ENCODE measurements at regions of chr17 and their contacts with region 1.

Region 1: GRCh38 chr17:19362277-19363113 is at the start of gene B9D1:
- DNase-seq: peak; percentile 98
- ATAC-seq: peak; percentile 83
- H3K4me3 ChIP-seq: peak within 1 kb of the TSS; percentile 79
- H3K27ac ChIP-seq: peak within 1 kb of the TSS; percentile 59
- H3K4me1 ChIP-seq: peaks cover 10% of the 10 kb centered on the region
- H3K27me3 ChIP-seq: no peaks in the 10 kb centered on the region
- CTCF ChIP-seq: peak; percentile 98
- total RNA-seq, gene B9D1: 42.8 and 48.0 TPM in 2 replicates

Region 2: GRCh38 chr17:19348807-19349206 is 13.7 kb before region 1 on chr17:
- CTCF ChIA-PET with region 1: interaction called, 13 read pairs
- POLR2A ChIA-PET with region 1: no interaction called
- intact Hi-C with region 1: no loop called
- DNase-seq: no peak
- ATAC-seq: no peak
- H3K4me3 ChIP-seq: no peak overlapping the region
- H3K27ac ChIP-seq: no peak overlapping the region
- H3K4me1 ChIP-seq: peaks cover 30% of the 10 kb centered on the region
- H3K27me3 ChIP-seq: no peaks in the 10 kb centered on the region
- CTCF ChIP-seq: no peak

Region 3: DNA sequence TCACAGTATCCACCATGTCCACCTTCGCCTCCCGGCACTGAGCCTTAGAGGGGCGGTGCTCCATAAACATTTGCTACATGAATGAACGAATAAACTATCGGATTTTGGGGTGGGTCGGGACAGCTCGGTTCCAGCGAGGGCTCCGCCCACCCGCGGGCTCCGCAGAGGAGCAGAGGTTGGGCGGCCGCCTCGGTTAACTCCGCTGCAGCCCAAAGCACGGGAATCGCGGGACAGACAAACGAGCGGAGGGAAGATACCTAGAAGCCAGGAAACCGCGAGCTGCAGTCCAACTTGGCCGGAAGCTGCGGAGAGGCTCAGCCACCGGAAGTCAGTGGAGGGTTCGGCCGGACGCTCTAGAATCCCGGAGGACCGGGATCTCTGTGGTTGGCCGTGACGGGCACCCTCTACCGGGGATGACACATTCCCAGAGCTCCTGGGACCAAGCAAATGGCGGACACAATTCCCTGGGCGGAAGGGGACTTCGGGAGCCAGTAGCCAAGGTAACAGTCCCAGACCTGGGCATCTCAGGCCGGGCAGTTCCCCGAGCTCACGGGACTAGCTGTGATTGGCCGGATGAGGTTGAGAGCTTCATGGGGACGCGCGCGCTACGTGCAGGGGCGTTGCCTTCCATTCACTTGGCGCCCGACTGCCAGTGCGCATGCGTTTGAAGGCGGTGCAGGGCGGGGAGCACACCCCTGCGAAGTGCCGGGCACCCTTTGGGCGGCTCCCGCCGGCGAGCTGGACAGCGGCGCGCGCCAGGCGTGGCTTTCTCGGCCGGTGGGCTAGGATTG is 15.3 kb after region 1 on chr17:
- CTCF ChIA-PET with region 1: interaction called, 16 read pairs
- POLR2A ChIA-PET with region 1: interaction called, 13 read pairs
- intact Hi-C with region 1: loop called (anchors 1 kb)
- DNase-seq: peak; percentile 99
- ATAC-seq: peak; percentile 92
- H3K4me3 ChIP-seq: peak overlapping the region; percentile 78
- H3K27ac ChIP-seq: peak overlapping the region; percentile 84
- H3K4me1 ChIP-seq: peaks cover 15% of the 10 kb centered on the region
- H3K27me3 ChIP-seq: no peaks in the 10 kb centered on the region
- CTCF ChIP-seq: no peak

Region 4: GRCh38 chr17:19410875-19411620 is 48.6 kb after region 1 on chr17 and contains the start of gene RNF112:
- CTCF ChIA-PET with region 1: no interaction called
- POLR2A ChIA-PET with region 1: no interaction called
- intact Hi-C with region 1: no loop called
- DNase-seq: no peak
- ATAC-seq: no peak
- H3K4me3 ChIP-seq: no peak within 1 kb of the TSS
- H3K27ac ChIP-seq: no peak within 1 kb of the TSS
- H3K4me1 ChIP-seq: no peaks in the 10 kb centered on the region
- H3K27me3 ChIP-seq: no peaks in the 10 kb centered on the region
- CTCF ChIP-seq: no peak
- total RNA-seq, gene RNF112: 0.18 and 1.0 TPM in 2 replicates

Region 5: DNA sequence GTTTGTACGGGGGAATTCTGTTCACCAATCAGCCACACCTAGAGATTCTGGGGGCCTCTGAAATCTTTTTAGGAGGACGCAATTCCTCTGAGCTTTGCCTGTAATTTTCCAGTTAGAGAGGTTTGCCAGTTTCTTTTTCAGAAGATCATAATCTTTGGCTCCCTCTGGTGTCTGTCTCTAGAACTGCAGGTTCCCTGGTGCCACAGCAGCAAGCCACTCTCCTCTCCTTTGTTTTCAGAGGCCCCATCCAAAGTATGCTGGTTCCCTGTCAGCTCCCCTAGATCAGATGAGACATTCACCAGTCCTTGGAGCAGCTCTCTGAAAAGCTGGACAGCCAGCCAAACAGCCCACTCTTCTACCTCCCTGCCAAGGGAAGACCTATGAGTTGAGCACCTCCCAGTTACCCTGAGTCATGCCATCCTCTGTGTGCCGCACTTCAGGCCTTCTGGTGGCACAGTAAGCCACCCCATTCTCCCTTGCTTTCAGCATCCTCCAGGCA is 84.6 kb after region 1 on chr17:
- CTCF ChIA-PET with region 1: interaction called, 17 read pairs
- POLR2A ChIA-PET with region 1: no interaction called
- intact Hi-C with region 1: loop called (anchors 1 kb)
- DNase-seq: peak; percentile 90
- ATAC-seq: peak; percentile 54
- H3K4me3 ChIP-seq: no peak overlapping the region
- H3K27ac ChIP-seq: no peak overlapping the region
- H3K4me1 ChIP-seq: peaks cover 11% of the 10 kb centered on the region
- H3K27me3 ChIP-seq: no peaks in the 10 kb centered on the region
- CTCF ChIP-seq: peak; percentile 95

Region 6: DNA sequence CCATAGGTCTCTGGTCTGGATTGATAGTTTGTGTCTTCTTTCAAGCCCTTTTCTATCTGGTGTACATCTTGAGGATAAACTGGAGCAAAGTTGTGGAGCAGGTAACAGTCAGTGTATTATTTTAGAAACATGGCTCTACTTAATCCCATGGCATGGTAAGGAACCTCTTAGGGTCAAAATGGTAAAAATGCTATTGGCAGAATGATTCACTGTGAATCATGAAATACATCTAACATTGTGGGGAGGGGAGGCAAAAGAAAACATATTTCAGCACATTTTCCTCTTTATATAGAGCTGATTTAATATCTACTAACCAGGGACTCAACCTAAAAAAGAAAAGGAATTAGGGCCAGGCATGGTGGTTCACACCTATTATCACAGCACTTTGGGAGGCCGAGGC is 268.2 kb after region 1 on chr17:
- CTCF ChIA-PET with region 1: no interaction called
- POLR2A ChIA-PET with region 1: interaction called, 23 read pairs
- intact Hi-C with region 1: no loop called
- DNase-seq: peak; percentile 90
- ATAC-seq: peak; percentile 86
- H3K4me3 ChIP-seq: no peak overlapping the region
- H3K27ac ChIP-seq: peak overlapping the region; percentile 61
- H3K4me1 ChIP-seq: peaks cover 22% of the 10 kb centered on the region
- H3K27me3 ChIP-seq: no peaks in the 10 kb centered on the region
- CTCF ChIP-seq: no peak

Region 7: GRCh38 chr17:19766422-19767270 is 404.2 kb after region 1 on chr17:
- CTCF ChIA-PET with region 1: interaction called, 5 read pairs
- POLR2A ChIA-PET with region 1: no interaction called
- intact Hi-C with region 1: loop called (anchors 10 kb)
- DNase-seq: peak; percentile 86
- ATAC-seq: peak; percentile 95
- H3K4me3 ChIP-seq: no peak overlapping the region
- H3K27ac ChIP-seq: no peak overlapping the region
- H3K4me1 ChIP-seq: peaks cover 12% of the 10 kb centered on the region
- H3K27me3 ChIP-seq: no peaks in the 10 kb centered on the region
- CTCF ChIP-seq: peak; percentile 99